Pancreas (tissue), 10 donors: ENCODE measurements at regions of chr20 and their contacts with region 1.

Region 1: GRCh38 chr20:49330544-49331239 is 52.8 kb upstream of the ZNFX1 start:
- DNase-seq: no peak
- ATAC-seq: no peak
- H3K4me3 ChIP-seq: no peak overlapping the region
- H3K27ac ChIP-seq: no peak overlapping the region
- H3K4me1 ChIP-seq: no peaks in the 10 kb centered on the region
- H3K27me3 ChIP-seq: peaks cover 0 to 3% (median 0%) of the 10 kb centered on the region in 4 donors
- CTCF ChIP-seq: no peak

Region 2: DNA sequence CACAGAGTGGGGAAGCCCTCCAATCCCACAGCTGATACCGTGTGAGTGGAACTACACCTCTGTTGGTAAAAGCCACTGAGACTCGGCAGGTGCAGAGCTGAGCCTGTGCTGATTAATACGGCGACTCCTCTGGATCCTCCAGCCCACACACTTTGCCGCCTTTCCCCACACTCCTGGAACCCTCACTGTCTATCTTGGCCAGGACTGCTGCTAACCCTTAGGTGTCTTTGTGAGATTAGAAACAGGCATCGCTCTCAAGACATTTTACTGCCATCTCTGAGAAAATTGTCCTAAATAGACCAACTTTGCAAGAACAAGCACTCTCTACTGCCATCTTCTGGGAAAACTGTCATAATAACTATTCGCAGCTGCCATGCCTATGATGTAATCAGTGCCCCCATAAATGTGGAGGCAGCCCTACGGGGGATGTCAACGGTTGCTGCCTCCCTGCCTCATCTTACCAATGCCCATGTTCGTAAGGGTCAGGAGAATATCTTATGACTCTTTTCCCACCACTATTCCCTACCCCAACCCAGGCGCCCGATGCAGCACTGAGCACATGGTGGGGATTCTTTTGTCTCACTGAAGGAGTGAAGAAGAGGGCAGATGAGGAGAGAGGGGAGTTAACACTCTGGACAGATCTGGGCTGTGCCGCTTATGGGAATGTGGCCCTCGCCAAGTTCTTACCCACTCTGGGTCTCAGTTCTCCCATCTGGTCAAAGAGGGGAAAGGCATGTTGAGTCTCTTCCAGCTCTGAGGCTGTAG is 177.9 kb after region 1 on chr20:
- intact Hi-C with region 1: loop called in 2 of 3 experiments (anchors 5 to 10 kb)
- DNase-seq: no peak
- ATAC-seq: peak in 3 of 4 donors; percentile 43 to 72 (median 65)
- H3K4me3 ChIP-seq: no peak overlapping the region
- H3K27ac ChIP-seq: no peak overlapping the region
- H3K4me1 ChIP-seq: no peaks in the 10 kb centered on the region
- H3K27me3 ChIP-seq: no peaks in the 10 kb centered on the region
- CTCF ChIP-seq: peak in 2 of 4 donors; percentile 27

Region 3: GRCh38 chr20:49534255-49534712 is 203.6 kb after region 1 on chr20:
- intact Hi-C with region 1: loop called in 1 of 3 experiments (anchors 5 kb)
- DNase-seq: peak in 1 of 6 donors; percentile 57
- ATAC-seq: peak in 3 of 4 donors; percentile 81 to 83 (median 82)
- H3K4me3 ChIP-seq: no peak overlapping the region
- H3K27ac ChIP-seq: no peak overlapping the region
- H3K4me1 ChIP-seq: no peaks in the 10 kb centered on the region
- H3K27me3 ChIP-seq: no peaks in the 10 kb centered on the region
- CTCF ChIP-seq: peak; percentile 57 to 77 (median 77)